Activated B cell treated with CpG ODN at 0.5 μM for 24 hours (primary cell): ENCODE measurements at regions of chr9 and their contacts with region 1.

Region 1: GRCh38 chr9:132406554-132407122 is at the start of gene TTF1:
- DNase-seq: peak; percentile 85
- ATAC-seq: peak; percentile 80
- H3K4me3 Mint-ChIP-seq: peak within 1 kb of the TSS; percentile 94
- H3K27ac Mint-ChIP-seq: peak within 1 kb of the TSS; percentile 87
- H3K4me1 Mint-ChIP-seq: peaks cover 50% of the 10 kb centered on the region
- H3K27me3 Mint-ChIP-seq: peaks cover 1% of the 10 kb centered on the region
- CTCF ChIP-seq: no peak
- total RNA-seq, gene TTF1: 22.0 and 22.8 TPM in 2 replicates

Region 2: DNA sequence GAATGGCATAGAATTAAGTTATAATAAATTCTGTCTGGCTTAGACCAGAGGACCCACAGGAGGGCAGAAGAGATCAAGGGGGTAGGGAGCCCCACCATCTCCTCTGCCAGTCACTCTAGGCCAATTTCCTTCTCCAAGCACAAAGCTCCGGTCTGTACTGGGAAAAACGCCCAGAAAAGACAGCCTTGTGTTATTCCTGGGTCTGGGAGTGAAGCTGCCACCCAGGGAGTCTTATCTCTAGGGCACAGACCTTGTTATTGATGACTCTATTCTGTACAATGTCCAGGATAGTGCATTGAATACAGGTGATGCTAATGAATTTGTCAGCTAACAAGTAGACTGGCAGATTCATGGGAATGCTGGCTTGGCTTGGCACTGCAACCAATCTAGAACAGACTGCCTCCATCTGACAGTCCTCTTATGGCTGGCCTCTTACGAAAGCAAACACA is 387.7 kb before region 1 on chr9:
- CTCF ChIA-PET with region 1: no interaction called
- POLR2A ChIA-PET with region 1: no interaction called
- intact Hi-C with region 1: no loop called
- DNase-seq: no peak
- ATAC-seq: no peak
- H3K4me3 Mint-ChIP-seq: no peak overlapping the region
- H3K27ac Mint-ChIP-seq: no peak overlapping the region
- H3K4me1 Mint-ChIP-seq: no peaks in the 10 kb centered on the region
- H3K27me3 Mint-ChIP-seq: no peaks in the 10 kb centered on the region
- CTCF ChIP-seq: no peak

Region 3: GRCh38 chr9:132169672-132170392 is 236.8 kb before region 1 on chr9:
- CTCF ChIA-PET with region 1: no interaction called
- POLR2A ChIA-PET with region 1: no interaction called
- intact Hi-C with region 1: loop called (anchors 10 kb)
- DNase-seq: peak; percentile 59
- ATAC-seq: peak; percentile 54
- H3K4me3 Mint-ChIP-seq: no peak overlapping the region
- H3K27ac Mint-ChIP-seq: no peak overlapping the region
- H3K4me1 Mint-ChIP-seq: no peaks in the 10 kb centered on the region
- H3K27me3 Mint-ChIP-seq: peaks cover 52% of the 10 kb centered on the region
- CTCF ChIP-seq: peak; percentile 53

Region 4: GRCh38 chr9:132381966-132382541 is 24.6 kb before region 1 on chr9:
- CTCF ChIA-PET with region 1: no interaction called
- POLR2A ChIA-PET with region 1: interaction called, 8 read pairs
- intact Hi-C with region 1: loop called (anchors 1 kb)
- DNase-seq: peak; percentile 33
- ATAC-seq: peak; percentile 80
- H3K4me3 Mint-ChIP-seq: peak overlapping the region; percentile 80
- H3K27ac Mint-ChIP-seq: peak overlapping the region; percentile 99
- H3K4me1 Mint-ChIP-seq: peaks cover 76% of the 10 kb centered on the region
- H3K27me3 Mint-ChIP-seq: no peaks in the 10 kb centered on the region
- CTCF ChIP-seq: no peak

Region 5: GRCh38 chr9:132447346-132447745 is 40.7 kb after region 1 on chr9:
- CTCF ChIA-PET with region 1: no interaction called
- POLR2A ChIA-PET with region 1: no interaction called
- intact Hi-C with region 1: no loop called
- DNase-seq: no peak
- ATAC-seq: no peak
- H3K4me3 Mint-ChIP-seq: no peak overlapping the region
- H3K27ac Mint-ChIP-seq: no peak overlapping the region
- H3K4me1 Mint-ChIP-seq: no peaks in the 10 kb centered on the region
- H3K27me3 Mint-ChIP-seq: peaks cover 14% of the 10 kb centered on the region
- CTCF ChIP-seq: no peak

Region 6: DNA sequence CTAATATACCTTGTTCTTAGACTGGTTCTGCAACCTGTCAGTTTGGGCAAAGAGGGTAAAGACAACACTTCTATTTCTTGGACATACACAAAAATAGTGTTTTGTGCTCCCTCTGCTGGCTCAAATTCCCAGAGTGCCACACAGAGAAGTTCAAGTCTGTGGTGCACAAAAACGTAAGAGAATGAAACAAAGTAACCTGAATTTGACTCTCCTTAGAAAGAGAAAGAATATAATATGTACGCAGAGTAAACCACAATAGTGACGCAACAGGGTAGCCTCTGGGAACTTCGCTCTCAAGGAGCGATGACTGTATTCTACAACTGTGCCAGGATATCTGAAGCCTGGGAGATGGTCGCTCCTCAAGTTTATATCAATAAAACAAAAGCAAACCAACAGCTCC is 244.6 kb after region 1 on chr9:
- CTCF ChIA-PET with region 1: no interaction called
- POLR2A ChIA-PET with region 1: no interaction called
- intact Hi-C with region 1: loop called (anchors 2 kb)
- DNase-seq: no peak
- ATAC-seq: no peak
- H3K4me3 Mint-ChIP-seq: no peak overlapping the region
- H3K27ac Mint-ChIP-seq: no peak overlapping the region
- H3K4me1 Mint-ChIP-seq: no peaks in the 10 kb centered on the region
- H3K27me3 Mint-ChIP-seq: no peaks in the 10 kb centered on the region
- CTCF ChIP-seq: no peak

Region 7: DNA sequence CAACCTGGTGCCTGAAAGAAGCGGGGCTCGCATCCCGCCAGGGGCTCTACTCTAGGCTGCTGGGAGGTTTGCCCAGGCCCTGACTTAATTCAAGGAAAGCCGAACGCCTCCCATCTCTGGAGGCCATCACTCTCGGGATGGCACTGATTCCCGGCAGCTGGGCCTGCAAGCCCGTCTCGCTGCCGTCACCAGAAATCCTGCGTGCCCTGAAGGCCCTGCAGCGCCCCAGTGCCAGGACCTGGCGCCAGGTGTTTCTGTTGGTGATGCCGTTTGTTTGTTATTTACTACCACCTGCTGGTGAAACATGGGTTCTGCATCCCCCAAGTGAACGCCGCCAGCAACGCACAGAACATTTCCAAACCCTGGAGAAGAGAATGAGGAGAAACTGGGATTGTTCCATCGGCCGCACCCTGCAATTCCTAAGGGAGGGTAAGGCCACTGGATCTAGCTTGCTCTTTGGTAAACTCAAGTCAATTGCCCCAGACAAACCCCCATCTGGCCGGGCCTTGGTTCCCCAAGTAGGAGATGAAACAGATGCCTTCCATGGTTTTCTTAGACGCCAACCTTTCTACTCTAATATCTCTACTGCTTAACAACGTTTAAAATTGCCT is 393.5 kb after region 1 on chr9:
- CTCF ChIA-PET with region 1: interaction called, 4 read pairs
- POLR2A ChIA-PET with region 1: no interaction called
- intact Hi-C with region 1: loop called (anchors 1 kb)
- DNase-seq: peak; percentile 40
- ATAC-seq: peak; percentile 91
- H3K4me3 Mint-ChIP-seq: no peak overlapping the region
- H3K27ac Mint-ChIP-seq: no peak overlapping the region
- H3K4me1 Mint-ChIP-seq: peaks cover 13% of the 10 kb centered on the region
- H3K27me3 Mint-ChIP-seq: peaks cover 26% of the 10 kb centered on the region
- CTCF ChIP-seq: no peak

Region 8: DNA sequence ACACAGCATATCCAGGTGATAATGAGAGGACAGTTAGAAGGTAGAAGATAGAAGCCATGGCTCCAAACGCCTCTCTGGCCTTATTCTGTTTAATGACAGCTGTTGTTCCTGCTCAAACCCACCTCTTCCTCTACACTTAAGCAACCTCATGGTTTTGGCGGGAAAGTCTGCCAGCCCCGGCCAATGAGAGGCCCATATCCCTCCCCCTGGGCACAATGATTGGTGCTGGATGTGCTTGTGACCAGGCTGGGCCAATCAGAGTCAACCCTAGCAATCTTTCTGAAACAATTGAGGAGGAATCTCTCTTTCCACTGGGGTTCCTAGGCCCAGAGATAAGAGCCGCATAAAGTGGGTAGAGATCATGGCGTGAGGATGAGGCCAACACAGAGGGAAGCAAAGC is 567.1 kb after region 1 on chr9:
- CTCF ChIA-PET with region 1: interaction called, 3 read pairs
- POLR2A ChIA-PET with region 1: no interaction called
- intact Hi-C with region 1: loop called (anchors 2 kb)
- DNase-seq: no peak
- ATAC-seq: no peak
- H3K4me3 Mint-ChIP-seq: no peak overlapping the region
- H3K27ac Mint-ChIP-seq: no peak overlapping the region
- H3K4me1 Mint-ChIP-seq: peaks cover 13% of the 10 kb centered on the region
- H3K27me3 Mint-ChIP-seq: peaks cover 18% of the 10 kb centered on the region
- CTCF ChIP-seq: no peak